Transverse colon (tissue), 4 donors: ENCODE measurements at regions of chr6 and their contacts with region 1.

Region 1: DNA sequence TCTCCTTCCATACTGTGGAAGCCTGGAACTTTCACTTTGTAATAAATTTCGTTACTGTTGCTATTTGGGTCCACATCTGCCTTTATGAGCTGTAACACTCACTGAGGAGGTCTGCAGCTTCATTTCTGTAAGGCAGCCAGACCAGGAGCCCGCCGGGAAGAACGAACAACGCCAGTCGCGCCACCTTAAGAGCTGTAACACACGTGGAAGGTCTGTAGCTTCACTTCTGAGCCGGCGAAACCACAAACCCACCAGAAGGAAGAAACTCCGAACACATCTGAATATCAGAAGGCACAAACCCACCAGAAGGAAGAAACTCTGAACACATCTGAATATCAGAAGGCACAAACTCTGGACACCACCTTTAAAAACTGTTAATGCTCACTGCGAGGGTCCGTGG is 589.9 kb upstream of the SLC35B3 start:
- DNase-seq: no peak
- H3K4me3 ChIP-seq: no peak overlapping the region
- H3K27ac ChIP-seq: no peak overlapping the region
- H3K4me1 ChIP-seq: no peaks in the 10 kb centered on the region
- H3K27me3 ChIP-seq: no peaks in the 10 kb centered on the region
- CTCF ChIP-seq: no peak
- EP300 ChIP-seq: no peak
- POLR2A ChIP-seq: no peak

Region 2: GRCh38 chr6:8686077-8686476 is 339.2 kb before region 1 on chr6:
- in situ Hi-C with region 1: no loop called
- intact Hi-C with region 1: no loop called
- DNase-seq: no peak
- H3K4me3 ChIP-seq: no peak overlapping the region
- H3K27ac ChIP-seq: no peak overlapping the region
- H3K4me1 ChIP-seq: no peaks in the 10 kb centered on the region
- H3K27me3 ChIP-seq: no peaks in the 10 kb centered on the region
- CTCF ChIP-seq: no peak
- EP300 ChIP-seq: no peak
- POLR2A ChIP-seq: no peak

Region 3: DNA sequence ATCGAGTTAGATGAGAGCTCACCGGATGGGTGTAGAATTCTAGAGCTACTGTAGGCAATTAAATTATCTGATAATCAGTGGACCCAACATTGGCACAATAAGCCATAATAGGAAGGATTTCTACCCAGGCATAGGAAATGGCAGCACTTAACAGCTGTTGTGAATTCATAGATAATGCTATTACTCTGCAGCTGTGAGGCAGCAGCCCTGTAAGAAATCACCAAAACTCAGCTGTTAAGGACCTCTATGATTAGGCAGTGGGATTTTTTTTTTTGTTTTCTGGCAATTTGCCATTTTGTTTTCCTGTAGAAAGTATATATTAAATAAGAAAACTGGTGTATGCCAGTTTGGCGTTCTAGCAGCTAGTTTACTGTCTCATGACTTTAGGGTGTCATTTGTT is 19.2 kb after region 1 on chr6:
- in situ Hi-C with region 1: no loop called
- intact Hi-C with region 1: loop called (anchors 1 kb)
- DNase-seq: no peak
- H3K4me3 ChIP-seq: no peak overlapping the region
- H3K27ac ChIP-seq: no peak overlapping the region
- H3K4me1 ChIP-seq: no peaks in the 10 kb centered on the region
- H3K27me3 ChIP-seq: no peaks in the 10 kb centered on the region
- CTCF ChIP-seq: no peak
- EP300 ChIP-seq: no peak
- POLR2A ChIP-seq: no peak

Region 4: DNA sequence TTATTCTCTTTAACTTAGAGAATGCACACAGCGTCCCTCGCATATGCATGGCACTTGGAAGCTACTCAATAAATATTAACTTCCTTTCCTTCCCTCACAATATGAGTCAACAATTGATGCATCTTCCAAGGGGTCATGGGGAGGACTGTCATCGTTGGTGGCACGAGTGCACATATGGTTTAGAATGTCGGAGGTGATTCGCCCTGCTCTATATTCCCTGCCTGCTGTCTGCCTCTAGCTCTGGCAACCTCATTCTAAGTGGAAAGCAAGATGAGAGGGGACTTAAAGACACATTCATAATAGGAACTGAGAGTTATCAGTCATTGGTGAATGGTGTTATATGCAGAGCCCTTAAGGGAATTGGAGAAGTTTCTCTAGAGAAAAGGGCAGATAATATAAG is 1768.5 kb after region 1 on chr6:
- in situ Hi-C with region 1: no loop called
- intact Hi-C with region 1: loop called (anchors 5 kb)
- DNase-seq: no peak
- H3K4me3 ChIP-seq: no peak overlapping the region
- H3K27ac ChIP-seq: no peak overlapping the region
- H3K4me1 ChIP-seq: no peaks in the 10 kb centered on the region
- H3K27me3 ChIP-seq: no peaks in the 10 kb centered on the region
- CTCF ChIP-seq: no peak
- EP300 ChIP-seq: no peak
- POLR2A ChIP-seq: no peak